SK-N-SH (cell line): ENCODE measurements at regions of chr7 and their contacts with region 1.

Region 1: DNA sequence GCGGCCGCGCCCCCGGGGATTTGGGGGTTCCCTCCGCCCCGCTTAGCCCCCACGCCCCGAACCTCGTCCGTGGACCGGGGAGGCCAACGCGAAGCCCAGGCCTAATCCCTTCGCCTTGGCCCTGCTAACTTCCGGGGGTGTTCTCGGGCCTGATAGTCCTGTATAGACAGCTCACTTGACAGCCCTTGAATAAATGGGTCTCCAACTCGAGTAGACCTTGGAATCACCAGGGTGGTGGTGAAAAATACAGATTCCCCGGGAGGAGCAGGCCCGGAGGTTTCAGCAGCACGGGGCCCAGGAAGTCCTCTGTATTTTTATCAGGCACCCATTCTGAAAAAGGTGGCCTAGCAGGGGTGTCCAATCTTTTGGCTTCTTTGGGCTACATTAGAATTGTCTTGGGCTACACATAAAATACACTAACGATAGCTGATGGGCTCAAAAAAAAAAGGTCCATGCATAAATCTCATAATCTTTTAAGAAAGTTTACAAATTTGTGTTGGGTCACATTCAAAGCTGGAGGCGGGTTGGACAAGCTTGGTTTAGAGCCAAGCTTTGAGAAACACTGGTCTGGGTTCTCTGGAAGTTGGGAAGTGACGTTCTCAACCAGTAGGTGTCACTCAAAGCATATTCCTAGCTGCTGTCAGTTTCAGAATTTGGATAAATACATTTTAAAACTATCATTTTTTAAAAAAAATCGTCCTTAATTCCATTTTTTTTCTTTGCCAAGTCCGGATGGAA is 221.7 kb downstream of the PHTF2 start:
- DNase-seq: peak; percentile 83
- H3K4me3 ChIP-seq: peak overlapping the region; percentile 0 to 74; a peak in 3 of 4 replicates
- H3K27ac ChIP-seq: peak overlapping the region; percentile 71 to 98
- H3K4me1 ChIP-seq: peaks cover 8 to 43% of the 10 kb centered on the region in 2 experiments; a peak in 3 of 4 replicates
- H3K27me3 ChIP-seq: no peaks in the 10 kb centered on the region
- CTCF ChIP-seq: peak; percentile 97
- EP300 ChIP-seq: no peak; a peak in 1 of 4 replicates
- RAD21 ChIP-seq: peak; percentile 93

Region 2: DNA sequence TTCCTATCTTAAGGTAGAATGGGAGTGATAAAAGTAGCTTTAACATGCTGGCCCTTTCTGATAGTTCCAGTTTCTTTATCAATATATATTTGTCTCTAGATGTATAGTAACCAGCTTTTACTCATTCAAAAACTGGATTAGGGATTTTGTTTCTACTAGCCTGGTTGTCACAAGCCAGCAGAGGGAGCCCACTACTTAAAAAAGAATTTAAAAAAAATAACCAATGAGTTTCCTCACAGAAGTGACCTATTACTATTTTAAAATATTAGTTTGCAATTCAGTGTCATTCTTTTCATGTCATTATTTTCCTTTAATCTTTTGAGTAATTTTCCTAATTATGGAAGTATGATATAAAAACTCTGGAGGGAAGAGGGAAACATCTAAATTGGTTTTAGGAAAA is 79.7 kb before region 1 on chr7:
- CTCF ChIA-PET with region 1: interaction called, 40 read pairs
- POLR2A ChIA-PET with region 1: no interaction called
- DNase-seq: peak; percentile 67
- H3K4me3 ChIP-seq: no peak overlapping the region; a peak in 1 of 4 replicates
- H3K27ac ChIP-seq: no peak overlapping the region
- H3K4me1 ChIP-seq: no peaks in the 10 kb centered on the region
- H3K27me3 ChIP-seq: no peaks in the 10 kb centered on the region
- CTCF ChIP-seq: peak; percentile 99
- EP300 ChIP-seq: no peak
- RAD21 ChIP-seq: peak; percentile 91

Region 3: GRCh38 chr7:78006063-78006755 is 14.1 kb before region 1 on chr7:
- CTCF ChIA-PET with region 1: interaction called, 18 read pairs
- POLR2A ChIA-PET with region 1: no interaction called
- DNase-seq: no peak
- H3K4me3 ChIP-seq: no peak overlapping the region
- H3K27ac ChIP-seq: no peak overlapping the region
- H3K4me1 ChIP-seq: peaks cover 0 to 4% of the 10 kb centered on the region in 2 experiments; a peak in 2 of 4 replicates
- H3K27me3 ChIP-seq: no peaks in the 10 kb centered on the region
- CTCF ChIP-seq: no peak
- EP300 ChIP-seq: no peak
- RAD21 ChIP-seq: no peak

Region 4: DNA sequence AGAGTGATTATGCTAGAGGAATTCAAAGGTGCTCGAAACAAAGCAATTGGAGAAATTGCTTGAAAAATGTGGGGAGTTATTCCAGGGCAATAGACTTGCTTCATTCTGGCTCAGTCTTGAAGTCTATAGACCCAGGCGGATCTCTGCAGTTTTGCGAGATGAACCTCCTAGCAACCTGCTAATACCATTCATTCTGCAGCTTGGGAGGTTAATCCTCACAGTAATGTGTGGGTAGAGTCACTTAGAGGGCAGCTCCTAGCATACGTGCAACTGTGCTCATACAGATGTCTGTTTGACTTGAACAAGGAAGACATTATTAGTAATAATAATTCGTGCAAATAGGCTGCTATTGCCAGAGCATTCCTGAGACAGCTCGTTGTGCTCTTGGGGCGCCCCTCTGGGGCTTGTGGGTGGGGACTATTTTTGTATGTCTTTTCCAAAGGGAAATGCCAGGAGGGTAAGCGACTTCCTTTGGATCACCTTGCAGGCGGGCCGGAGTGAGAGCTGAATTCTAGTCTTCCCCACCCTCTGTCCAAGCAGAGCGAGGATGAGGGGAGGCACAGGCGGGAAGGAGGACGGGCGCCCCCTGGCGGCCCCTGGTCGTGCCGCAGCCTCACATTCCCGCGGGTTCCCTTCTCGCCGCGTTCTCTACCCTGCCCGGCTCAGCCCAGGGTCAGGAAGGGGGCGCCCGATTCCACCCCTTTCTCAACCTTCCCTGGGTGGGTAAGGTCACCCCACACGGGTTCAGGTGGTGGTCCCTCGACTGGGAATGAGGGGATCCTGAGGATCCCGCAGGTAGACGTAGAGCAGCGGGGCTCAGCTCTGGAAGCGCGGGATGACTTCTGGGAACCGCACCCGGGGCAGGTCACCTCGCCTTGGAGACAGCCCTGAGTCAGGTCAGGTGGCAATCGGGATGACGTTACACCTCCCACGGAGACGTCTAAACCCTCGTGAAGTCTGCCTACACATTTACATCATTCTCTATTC is 19.8 kb after region 1 on chr7:
- CTCF ChIA-PET with region 1: interaction called, 49 read pairs
- POLR2A ChIA-PET with region 1: no interaction called
- DNase-seq: no peak
- H3K4me3 ChIP-seq: no peak overlapping the region
- H3K27ac ChIP-seq: no peak overlapping the region
- H3K4me1 ChIP-seq: no peaks in the 10 kb centered on the region
- H3K27me3 ChIP-seq: no peaks in the 10 kb centered on the region
- CTCF ChIP-seq: peak; percentile 16
- EP300 ChIP-seq: no peak
- RAD21 ChIP-seq: no peak

Region 5: DNA sequence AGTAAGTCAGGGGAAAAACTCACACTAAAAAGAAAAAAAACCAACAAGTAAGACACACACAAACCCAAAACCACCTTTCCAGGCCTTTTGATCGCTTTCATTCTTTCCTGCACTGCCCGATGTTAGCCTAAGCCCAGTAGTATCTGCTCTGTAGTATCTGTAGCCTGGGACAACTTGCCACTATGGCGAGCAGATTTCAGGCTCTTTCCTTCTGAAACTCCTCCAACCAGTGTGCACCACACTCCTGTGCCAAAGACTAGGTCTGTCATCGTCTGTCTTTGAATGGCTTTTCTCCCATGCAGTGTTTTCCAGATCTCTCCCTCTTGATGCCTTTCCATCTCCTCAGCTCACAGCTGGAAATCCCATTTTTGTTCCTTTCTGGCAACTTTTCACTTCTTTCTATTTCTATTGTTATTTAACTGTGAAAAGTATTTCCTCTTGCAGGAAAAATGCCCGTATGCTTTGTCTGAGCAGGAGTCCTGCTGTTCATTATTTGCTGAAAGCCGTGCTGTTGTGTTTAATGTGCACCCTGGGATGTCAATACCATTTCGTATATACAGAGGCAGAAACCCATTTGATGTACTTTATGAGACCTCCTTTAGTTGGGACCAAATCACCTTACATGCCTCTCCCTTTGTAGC is 152.0 kb after region 1 on chr7:
- CTCF ChIA-PET with region 1: no interaction called
- POLR2A ChIA-PET with region 1: no interaction called
- DNase-seq: no peak
- H3K4me3 ChIP-seq: no peak overlapping the region
- H3K27ac ChIP-seq: no peak overlapping the region
- H3K4me1 ChIP-seq: no peaks in the 10 kb centered on the region
- H3K27me3 ChIP-seq: no peaks in the 10 kb centered on the region
- CTCF ChIP-seq: no peak
- EP300 ChIP-seq: no peak
- RAD21 ChIP-seq: no peak

Region 6: DNA sequence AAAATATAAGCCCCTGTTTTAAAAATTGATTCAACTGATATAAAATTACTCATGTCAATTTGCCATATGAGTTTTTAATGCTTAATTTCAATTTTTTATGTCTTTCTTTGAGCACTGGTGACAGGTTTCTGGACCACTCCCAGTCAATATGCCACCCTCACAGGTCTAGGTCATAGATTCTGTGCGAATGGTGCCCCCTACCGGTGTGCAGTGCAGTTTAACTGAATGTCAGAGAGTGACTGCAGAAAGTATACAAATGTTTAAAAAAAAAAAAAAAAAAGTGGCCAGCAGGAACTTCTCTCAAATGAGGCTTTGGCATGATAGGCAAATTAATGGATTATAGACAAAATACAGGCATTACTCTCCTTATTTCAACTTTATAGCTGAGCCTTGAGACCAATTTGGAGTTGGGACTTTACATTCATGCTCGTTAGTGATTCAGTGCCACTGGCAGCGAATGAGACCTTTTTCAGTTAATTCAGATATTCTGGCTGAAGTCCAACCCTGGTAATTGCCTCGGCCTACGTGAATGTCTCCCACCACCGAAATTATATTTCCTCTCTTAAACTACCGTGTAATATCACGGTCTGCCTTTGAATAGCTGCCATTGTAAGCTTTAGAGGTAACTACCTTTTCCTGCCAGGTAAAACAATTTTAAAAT is 205.9 kb after region 1 on chr7:
- CTCF ChIA-PET with region 1: interaction called, 37 read pairs
- POLR2A ChIA-PET with region 1: interaction called, 4 read pairs
- DNase-seq: peak; percentile 66
- H3K4me3 ChIP-seq: no peak overlapping the region
- H3K27ac ChIP-seq: peak overlapping the region in 1 of 2 experiments; percentile 51; a peak in 1 of 4 replicates
- H3K4me1 ChIP-seq: peaks cover 6 to 7% of the 10 kb centered on the region in 2 experiments; a peak in 3 of 4 replicates
- H3K27me3 ChIP-seq: no peaks in the 10 kb centered on the region
- CTCF ChIP-seq: peak; percentile 87
- EP300 ChIP-seq: no peak
- RAD21 ChIP-seq: peak; percentile 90

Region 7: DNA sequence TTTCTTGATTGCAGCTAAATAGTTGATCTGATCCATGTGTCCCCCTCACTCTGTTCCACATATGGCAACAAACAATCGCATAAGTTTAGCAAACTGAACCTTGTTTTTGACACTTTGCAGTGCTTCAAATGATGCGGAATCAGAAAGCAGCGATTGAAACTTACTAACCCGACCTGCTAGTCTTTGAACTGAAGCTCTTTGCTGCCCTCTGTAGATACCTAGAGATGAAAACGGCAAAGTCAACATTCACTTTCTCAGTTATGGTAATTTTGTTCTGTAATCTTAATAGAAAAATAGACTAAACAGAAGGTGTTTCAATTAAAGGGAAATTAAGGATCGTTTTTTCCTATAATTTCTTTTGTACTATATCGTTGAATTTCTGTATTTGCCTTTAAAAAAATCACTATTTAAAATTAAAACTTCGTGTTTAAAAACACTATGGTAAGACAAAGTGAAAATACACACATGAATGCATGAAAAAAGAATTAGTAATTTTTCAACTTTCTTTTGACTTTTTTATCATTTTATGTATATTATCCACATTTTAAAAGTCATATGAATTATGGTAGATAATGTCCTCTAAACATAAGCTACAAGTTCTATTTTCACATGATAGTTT is 1156.7 kb after region 1 on chr7:
- CTCF ChIA-PET with region 1: interaction called, 29 read pairs
- POLR2A ChIA-PET with region 1: no interaction called
- DNase-seq: peak; percentile 23
- H3K4me3 ChIP-seq: no peak overlapping the region
- H3K27ac ChIP-seq: no peak overlapping the region
- H3K4me1 ChIP-seq: no peaks in the 10 kb centered on the region; a peak in 1 of 4 replicates
- H3K27me3 ChIP-seq: no peaks in the 10 kb centered on the region
- CTCF ChIP-seq: peak; percentile 92
- EP300 ChIP-seq: no peak
- RAD21 ChIP-seq: peak; percentile 92